ENCODE measurements at regions of chr11 and their contacts with region 1.

Region 1: GRCh38 chr11:27183672-27184457 is 143.2 kb downstream of the BBOX1 start:
- DNase-seq: peak; percentile 80
- H3K4me3 ChIP-seq: no peak overlapping the region
- H3K27ac ChIP-seq: no peak overlapping the region
- H3K4me1 ChIP-seq: peaks cover 6% of the 10 kb centered on the region
- H3K27me3 ChIP-seq: no peaks in the 10 kb centered on the region
- CTCF ChIP-seq: peak; percentile 67

Region 2: DNA sequence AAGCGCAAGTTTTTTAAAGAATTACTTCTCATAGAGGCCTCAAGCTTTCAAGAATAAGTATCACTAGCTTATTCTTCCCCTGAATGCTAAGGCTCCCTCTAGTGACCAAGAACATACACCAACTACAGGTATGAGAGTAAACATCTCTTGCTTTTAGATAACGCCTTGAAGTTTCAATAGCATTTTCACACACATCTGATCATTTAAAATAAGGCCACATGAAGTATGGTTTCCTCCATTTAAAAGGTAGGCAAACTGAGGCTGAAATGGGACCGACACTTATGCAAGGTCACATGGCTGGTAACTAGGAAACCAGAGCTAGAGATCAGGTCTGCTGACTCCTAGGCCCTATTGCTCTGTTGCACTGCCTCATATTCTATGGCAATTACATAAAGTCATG is 112.6 kb after region 1 on chr11:
- intact Hi-C with region 1: loop called (anchors 2 kb)
- DNase-seq: no peak
- H3K4me3 ChIP-seq: no peak overlapping the region
- H3K27ac ChIP-seq: no peak overlapping the region
- H3K4me1 ChIP-seq: peaks cover 5% of the 10 kb centered on the region
- H3K27me3 ChIP-seq: no peaks in the 10 kb centered on the region
- CTCF ChIP-seq: peak; percentile 35

Region 3: DNA sequence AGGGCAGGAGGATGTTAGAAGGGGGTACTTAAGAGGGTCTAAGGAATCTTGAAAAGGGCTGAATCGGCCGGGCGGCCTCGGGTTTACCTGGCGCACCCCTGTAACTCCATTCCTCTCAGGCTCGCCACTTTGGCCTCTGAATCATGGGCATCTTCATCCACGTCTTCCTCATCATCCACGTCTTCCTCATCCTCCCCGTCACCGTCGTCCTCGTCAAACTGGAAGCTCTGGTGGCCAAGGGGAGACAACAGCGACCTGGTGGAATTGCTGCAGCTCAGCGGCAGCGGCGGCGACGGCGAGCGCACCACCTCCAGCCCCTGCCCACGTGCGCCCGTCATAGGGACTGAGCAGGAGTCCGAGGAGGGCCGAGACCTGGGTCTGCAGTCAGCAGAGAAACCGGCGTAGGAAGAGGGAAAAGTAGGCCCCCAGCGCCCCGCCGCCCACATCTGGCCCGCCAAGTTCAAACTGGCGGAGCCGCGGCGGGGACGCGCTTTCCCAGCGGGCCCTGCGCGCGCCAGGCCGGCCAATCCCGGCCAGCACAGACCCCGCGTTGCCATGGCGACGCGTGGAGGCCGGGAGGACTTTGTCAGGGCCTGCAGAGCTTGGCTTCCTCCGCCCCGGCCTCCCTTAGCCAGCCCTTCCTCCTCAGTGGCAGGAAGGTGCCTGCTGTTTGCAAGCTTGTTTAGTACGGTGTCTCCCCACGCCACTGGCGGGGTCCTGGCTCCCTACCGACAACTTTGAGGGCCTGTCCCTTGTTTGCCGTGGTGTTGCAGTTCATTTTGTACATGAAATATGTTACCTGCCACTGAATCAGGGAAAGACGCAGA is 179.1 kb after region 1 on chr11 and contains the start of gene CCDC34:
- intact Hi-C with region 1: loop called (anchors 10 kb)
- DNase-seq: peak; percentile 93
- H3K4me3 ChIP-seq: peak within 1 kb of the TSS; percentile 79
- H3K27ac ChIP-seq: peak within 1 kb of the TSS; percentile 57
- H3K4me1 ChIP-seq: peaks cover 10% of the 10 kb centered on the region
- H3K27me3 ChIP-seq: no peaks in the 10 kb centered on the region
- CTCF ChIP-seq: no peak
- total RNA-seq, gene CCDC34: 10.2 to 25.6 TPM

Region 4: GRCh38 chr11:27485930-27486773 is 302.3 kb after region 1 on chr11:
- intact Hi-C with region 1: loop called (anchors 2 kb)
- DNase-seq: peak; percentile 74
- H3K4me3 ChIP-seq: no peak overlapping the region
- H3K27ac ChIP-seq: no peak overlapping the region
- H3K4me1 ChIP-seq: no peaks in the 10 kb centered on the region
- H3K27me3 ChIP-seq: no peaks in the 10 kb centered on the region
- CTCF ChIP-seq: peak; percentile 92